Activated CD4-positive, alpha-beta T cell treated with anti-CD3 and anti-CD28 coated beads for 36 hours (primary cell): ENCODE measurements at regions of chr19 and their contacts with region 1.

Region 1: DNA sequence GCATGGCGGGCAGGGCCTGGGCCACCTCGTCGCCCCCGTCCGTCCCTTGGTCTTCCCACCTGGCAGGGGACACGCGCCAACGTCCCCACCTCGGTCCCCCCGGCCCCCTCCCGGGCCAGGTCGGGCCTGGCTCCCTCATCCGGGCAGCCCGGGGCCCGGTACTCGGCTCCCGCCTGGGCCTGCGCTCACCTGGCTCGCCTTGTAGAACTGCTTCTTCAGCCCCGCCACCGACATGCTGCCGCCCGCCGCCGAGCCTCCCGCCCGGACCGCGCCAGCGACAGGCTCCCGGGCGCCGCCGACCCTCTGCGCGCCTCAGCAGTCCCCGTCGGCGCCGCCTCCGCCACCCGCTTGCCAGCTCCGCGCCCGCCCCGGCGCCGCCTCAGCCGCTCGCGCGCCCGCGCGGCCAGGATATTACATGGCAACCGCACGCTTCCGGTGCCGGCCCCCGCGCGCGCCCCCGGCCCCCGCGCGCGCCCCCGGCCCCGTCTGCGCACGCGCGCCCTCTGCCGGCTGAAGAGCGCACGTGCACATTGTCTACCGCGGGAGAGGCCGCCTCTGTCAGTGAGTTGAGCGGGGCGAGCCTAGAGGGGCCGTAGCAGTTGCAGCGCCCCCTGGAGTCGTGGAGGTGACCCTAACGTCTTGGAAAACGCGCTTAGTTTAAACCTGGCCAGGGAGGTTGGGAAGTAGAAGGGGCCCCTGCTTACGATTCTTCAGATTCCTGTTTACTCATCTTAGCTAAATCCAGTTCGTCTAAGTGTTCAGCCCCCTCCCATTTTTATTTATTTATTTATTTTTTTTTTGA is at the start of gene SH3GL1:
- DNase-seq: peak; percentile 95
- ATAC-seq: peak; percentile 54
- H3K4me3 Mint-ChIP-seq: peak within 1 kb of the TSS; percentile 93
- H3K27ac Mint-ChIP-seq: peak within 1 kb of the TSS; percentile 95
- H3K4me1 Mint-ChIP-seq: peaks cover 62% of the 10 kb centered on the region
- H3K27me3 Mint-ChIP-seq: no peaks in the 10 kb centered on the region
- total RNA-seq, gene SH3GL1: 42.0 to 46.8 TPM

Region 2: DNA sequence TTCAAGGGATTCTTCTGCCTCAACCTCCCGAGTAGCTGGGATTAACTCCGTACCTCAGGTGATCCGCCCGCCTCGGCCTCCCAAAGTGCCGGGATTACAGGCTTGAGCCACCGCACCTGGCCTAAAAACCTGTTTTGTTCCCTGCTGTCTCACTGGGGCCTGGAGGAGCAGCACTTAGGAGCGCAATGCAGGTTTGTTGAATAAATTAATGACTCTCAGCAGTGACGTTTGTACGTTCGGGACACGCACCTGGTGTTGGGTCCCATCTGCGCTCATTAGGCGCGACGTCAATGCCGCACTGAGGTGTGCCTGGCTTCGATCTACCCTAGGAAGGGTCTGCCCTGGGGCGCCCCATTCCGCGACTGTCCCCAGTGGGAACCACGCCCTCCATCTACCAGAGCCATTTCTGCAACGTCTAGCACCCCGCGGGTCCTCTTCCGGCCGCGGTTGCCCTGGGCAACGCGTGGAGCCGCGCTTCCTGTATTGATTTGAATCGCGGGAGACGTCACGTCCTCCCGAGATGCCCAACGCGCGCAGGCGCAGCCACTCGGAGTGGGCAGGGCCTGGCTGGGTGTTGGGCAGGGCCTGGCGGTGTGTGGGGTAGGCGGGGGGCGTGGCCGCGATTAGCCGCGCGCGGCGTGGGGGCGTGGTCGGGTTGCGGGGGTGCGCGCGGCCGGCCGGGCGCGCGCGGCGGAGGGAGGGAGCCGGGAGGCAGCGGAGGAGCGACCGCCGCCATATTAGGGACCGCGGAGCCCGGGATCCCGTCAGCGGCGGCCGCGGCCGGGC is 894.5 kb before region 1 on chr19 and contains the start of gene FZR1:
- CTCF ChIA-PET with region 1: no interaction called
- POLR2A ChIA-PET with region 1: no interaction called
- intact Hi-C with region 1: loop called in 1 of 2 experiments (anchors 1 kb)
- DNase-seq: peak; percentile 100
- ATAC-seq: peak; percentile 92
- H3K4me3 Mint-ChIP-seq: peak within 1 kb of the TSS; percentile 84
- H3K27ac Mint-ChIP-seq: peak within 1 kb of the TSS; percentile 86
- H3K4me1 Mint-ChIP-seq: peaks cover 45% of the 10 kb centered on the region
- H3K27me3 Mint-ChIP-seq: no peaks in the 10 kb centered on the region
- total RNA-seq, gene FZR1: 40.8 to 50.7 TPM

Region 3: DNA sequence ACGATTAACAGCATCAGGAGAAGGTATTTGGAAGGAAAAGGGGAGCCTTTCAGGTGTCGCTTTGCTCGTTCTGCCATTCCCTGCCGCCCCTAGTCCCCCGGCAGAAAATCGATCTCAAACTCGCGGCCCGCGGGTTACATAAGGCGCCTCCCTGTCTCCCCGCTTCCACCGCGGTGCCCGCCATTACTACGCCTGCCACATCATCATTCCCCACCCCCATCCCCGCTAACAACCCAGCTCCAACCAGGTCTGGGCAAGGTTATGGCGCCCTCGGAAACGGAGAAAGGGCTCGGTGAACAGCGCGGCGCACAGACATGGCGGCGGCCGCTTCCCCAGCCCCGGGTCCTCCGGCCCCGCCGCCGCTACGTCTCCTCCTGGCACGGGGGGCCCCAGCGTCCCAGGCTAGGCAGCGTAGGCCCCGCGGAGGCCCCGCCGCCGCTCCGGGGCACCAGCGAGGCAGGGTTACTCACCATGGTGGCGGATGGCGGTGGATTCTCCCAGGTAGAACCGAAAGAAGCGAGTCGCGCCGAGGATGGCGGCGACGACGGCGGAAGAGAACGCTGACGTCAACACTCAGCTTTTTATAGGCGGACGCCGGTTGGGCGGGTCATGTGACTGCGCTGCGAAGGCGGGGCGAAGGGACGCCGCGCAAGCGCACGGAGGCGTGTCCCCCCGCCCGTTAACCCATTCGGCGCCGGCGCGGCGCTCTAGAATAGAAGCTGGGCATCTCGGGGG is 415.3 kb before region 1 on chr19 and contains the start of gene EEF2:
- CTCF ChIA-PET with region 1: no interaction called
- POLR2A ChIA-PET with region 1: no interaction called
- intact Hi-C with region 1: loop called in 1 of 2 experiments (anchors 2 kb)
- DNase-seq: peak; percentile 94
- ATAC-seq: peak; percentile 45
- H3K4me3 Mint-ChIP-seq: peak within 1 kb of the TSS; percentile 87
- H3K27ac Mint-ChIP-seq: peak within 1 kb of the TSS; percentile 94
- H3K4me1 Mint-ChIP-seq: peaks cover 52% of the 10 kb centered on the region
- H3K27me3 Mint-ChIP-seq: no peaks in the 10 kb centered on the region
- total RNA-seq, gene EEF2: 3,116 to 3,255 TPM

Region 4: DNA sequence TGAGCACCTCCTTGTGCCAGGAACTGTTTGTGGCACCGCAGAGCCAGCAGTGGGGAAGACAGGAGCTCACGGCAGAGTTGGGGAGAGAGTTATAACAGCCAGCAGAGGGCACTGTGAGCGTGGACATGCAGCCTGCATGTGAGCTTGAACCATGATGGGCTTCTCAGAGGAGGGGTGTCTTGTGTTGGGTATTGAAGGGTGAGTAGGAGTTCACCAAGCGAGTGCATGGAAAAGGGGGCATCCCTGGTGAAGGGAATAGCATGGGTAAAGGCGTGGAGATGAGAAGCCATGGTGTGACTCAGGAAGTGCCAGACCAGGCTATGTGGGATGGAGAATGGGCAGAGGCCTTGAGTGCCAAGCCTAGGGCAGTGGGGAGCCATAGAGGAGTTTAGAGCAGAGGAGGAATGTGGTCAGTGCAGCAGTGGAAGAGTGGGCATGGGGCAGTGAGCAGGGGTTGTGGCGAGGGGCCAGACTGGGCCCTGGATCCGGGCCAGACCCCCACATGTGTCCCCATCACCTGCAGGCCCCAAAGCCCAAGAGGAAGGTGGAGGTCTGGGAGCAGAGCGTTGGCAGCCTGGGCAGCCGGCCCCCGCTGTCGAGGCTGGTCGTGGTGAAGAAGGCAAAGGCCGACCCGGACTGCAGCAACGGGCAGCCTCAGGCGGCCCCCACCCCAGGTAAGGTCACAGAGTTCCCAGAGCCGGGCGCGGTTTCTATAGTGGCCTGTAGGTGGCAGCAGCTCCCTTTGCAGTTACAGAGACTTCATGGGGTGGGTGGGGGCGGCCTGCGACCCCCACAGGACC is 133.0 kb before region 1 on chr19:
- CTCF ChIA-PET with region 1: interaction called, 3 read pairs
- POLR2A ChIA-PET with region 1: interaction called, 3 read pairs
- intact Hi-C with region 1: loop called in 1 of 2 experiments (anchors 1 kb)
- DNase-seq: peak; percentile 83
- ATAC-seq: peak; percentile 81
- H3K4me3 Mint-ChIP-seq: no peak overlapping the region
- H3K27ac Mint-ChIP-seq: peak overlapping the region; percentile 9
- H3K4me1 Mint-ChIP-seq: peaks cover 14% of the 10 kb centered on the region
- H3K27me3 Mint-ChIP-seq: no peaks in the 10 kb centered on the region

Region 5: DNA sequence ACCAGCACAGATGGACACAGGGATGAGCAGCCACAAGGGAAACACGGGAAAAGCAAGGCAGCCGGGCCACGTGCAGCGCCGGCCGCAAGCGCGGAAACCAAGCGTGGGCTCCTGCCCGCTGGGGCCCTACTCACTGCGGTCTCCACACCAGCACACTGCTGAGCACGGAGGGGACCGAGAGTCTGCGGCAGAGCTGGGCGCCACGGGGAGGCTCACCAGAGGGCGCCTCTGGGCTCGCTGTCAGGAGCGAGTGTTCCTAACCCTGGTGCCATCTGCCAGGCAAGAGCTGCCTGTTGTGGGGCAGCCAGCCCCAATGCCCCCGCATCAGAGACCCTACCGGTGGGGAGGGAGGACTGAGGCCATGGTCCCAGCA is 30.5 kb before region 1 on chr19:
- CTCF ChIA-PET with region 1: interaction called, 4 read pairs
- POLR2A ChIA-PET with region 1: interaction called, 4 read pairs
- intact Hi-C with region 1: loop called (anchors 1 kb)
- DNase-seq: peak; percentile 91
- ATAC-seq: peak; percentile 79
- H3K4me3 Mint-ChIP-seq: peak overlapping the region; percentile 63
- H3K27ac Mint-ChIP-seq: peak overlapping the region; percentile 93
- H3K4me1 Mint-ChIP-seq: peaks cover 40% of the 10 kb centered on the region
- H3K27me3 Mint-ChIP-seq: no peaks in the 10 kb centered on the region

Region 6: DNA sequence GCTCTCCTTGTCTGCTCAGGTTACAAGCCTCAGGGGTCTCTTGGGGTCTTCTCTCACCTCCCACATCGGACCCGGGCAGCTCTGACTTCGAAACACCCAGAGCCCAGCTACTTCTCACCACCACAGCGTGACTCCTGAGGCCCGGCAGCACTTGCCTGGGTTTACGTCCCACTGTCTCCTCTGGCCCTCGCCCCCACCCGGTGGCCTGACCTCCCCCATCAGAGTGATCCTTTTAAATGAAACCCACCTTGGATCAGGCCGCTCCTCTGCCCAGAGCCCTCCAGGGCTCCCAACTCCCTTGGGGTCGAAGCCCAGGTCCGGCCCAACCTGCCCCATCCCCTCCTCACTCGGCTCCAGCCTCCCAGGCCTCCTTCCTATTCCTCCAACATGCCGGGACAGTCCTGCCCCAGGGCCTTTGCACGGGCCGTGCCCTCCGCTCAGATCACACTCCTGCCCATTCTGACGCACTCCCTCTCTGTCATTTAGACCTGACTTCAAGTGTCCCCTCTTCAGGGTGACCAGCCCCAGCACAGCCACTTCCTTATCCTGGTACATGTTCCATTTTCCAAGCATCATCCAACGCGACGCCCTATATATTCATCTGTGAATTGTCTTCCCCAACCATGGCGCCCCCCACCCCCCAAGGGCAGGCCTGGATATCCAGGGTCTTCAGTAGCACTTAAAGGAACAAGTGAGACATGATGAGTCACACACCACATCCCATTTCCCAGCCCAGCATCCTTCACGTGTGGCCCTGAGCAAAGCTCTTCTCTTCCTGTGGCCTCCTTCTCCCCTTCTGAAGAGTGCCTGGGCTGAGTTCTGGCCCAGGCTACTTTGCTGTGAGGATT is 105.8 kb after region 1 on chr19:
- CTCF ChIA-PET with region 1: no interaction called
- POLR2A ChIA-PET with region 1: no interaction called
- intact Hi-C with region 1: no loop called
- DNase-seq: peak; percentile 29
- ATAC-seq: peak; percentile 67
- H3K4me3 Mint-ChIP-seq: no peak overlapping the region
- H3K27ac Mint-ChIP-seq: no peak overlapping the region
- H3K4me1 Mint-ChIP-seq: peaks cover 7% of the 10 kb centered on the region
- H3K27me3 Mint-ChIP-seq: no peaks in the 10 kb centered on the region

Region 7: GRCh38 chr19:4705413-4706131 is 305.2 kb after region 1 on chr19:
- CTCF ChIA-PET with region 1: no interaction called
- POLR2A ChIA-PET with region 1: no interaction called
- intact Hi-C with region 1: no loop called
- DNase-seq: no peak
- ATAC-seq: no peak
- H3K4me3 Mint-ChIP-seq: no peak overlapping the region
- H3K27ac Mint-ChIP-seq: no peak overlapping the region
- H3K4me1 Mint-ChIP-seq: peaks cover 7% of the 10 kb centered on the region
- H3K27me3 Mint-ChIP-seq: no peaks in the 10 kb centered on the region

Region 8: DNA sequence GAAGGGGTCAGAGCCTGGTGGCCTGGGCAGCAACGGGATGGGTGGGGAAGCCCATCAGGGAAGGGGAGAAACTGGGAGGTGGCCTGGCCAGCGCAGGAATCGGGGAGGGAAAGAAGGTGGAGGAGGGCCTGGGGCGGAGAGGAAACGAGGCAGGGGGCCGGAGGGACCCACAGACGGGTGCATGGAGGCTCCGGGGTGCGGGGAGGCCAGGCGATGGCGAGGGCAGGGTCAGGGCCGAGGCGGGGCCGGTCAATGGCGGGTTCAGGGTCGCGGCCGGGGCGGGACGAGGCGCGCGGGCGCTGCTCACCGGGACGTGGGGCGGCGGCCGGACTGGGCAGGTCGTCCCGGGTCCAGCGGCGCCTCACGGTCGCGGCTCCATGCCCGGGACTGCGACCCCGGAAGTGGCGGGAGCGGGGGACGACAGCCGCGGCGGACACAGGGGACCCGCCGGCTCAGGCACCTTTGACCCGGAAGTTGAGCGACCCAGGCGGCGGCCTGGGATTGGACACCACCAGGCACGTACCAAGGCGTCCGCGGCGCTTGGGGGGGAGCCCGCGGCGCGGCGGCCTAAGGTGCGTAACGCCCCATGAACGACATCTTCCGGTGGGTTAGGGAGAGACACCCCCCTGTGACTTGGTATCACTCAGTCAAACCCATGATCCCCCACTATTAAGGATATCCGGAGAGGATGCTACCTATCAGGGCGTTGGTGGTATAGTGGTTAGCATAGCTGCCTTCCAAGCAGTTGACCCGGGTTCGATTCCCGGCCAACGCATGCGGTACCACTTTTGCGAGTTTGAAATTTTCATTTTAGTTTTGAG is 323.2 kb after region 1 on chr19 and contains the start of gene DPP9:
- CTCF ChIA-PET with region 1: no interaction called
- POLR2A ChIA-PET with region 1: no interaction called
- intact Hi-C with region 1: loop called in 1 of 2 experiments (anchors 1 kb)
- DNase-seq: peak; percentile 98
- ATAC-seq: peak; percentile 95
- H3K4me3 Mint-ChIP-seq: peak within 1 kb of the TSS; percentile 92
- H3K27ac Mint-ChIP-seq: peak within 1 kb of the TSS; percentile 93
- H3K4me1 Mint-ChIP-seq: peaks cover 26% of the 10 kb centered on the region
- H3K27me3 Mint-ChIP-seq: no peaks in the 10 kb centered on the region
- total RNA-seq, gene DPP9: 49.2 to 51.3 TPM